GM18951 (cell line): ENCODE measurements at regions of chr14 and their contacts with region 1.

Region 1: DNA sequence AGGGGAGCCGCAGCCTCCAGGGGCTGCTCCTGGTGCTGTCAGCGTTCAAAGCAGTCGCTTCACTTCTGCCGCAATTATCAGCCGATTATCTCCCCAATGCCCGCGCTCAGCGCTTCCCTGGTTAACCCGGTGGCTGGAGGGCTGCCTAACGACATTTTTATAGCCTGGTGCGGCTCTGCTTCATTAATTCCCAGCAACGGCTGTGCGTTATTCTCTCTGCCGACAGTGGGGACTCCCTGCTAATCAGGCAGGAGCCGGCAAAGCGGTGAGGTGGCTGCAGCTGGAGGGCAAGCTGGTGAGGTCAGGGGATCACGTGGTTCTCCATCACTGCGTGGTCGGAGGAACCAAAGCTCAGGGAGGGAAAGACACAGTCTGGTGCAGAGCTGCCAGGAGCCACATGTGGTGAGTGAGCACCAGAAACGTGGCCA is 62.9 kb downstream of the GLRX5 start:
- POLR2A ChIP-seq: no peak

Region 2: GRCh38 chr14:95174184-95174792 is 423.5 kb before region 1 on chr14:
- in situ Hi-C with region 1: no loop called
- POLR2A ChIP-seq: no peak

Region 3: GRCh38 chr14:96275177-96276112 is 677.6 kb after region 1 on chr14:
- in situ Hi-C with region 1: loop called (anchors 25 kb)
- POLR2A ChIP-seq: no peak